K562 (cell line): ENCODE measurements at regions of chr10 and their contacts with region 1.

Region 1: GRCh38 chr10:48506147-48506917 is 98.5 kb downstream of the ARHGAP22 start:
- DNase-seq: peak; percentile 81 to 95 (median 86)
- ATAC-seq: peak; percentile 94
- H3K4me3 ChIP-seq: no peak overlapping the region
- H3K27ac ChIP-seq: peak overlapping the region; percentile 63
- H3K4me1 ChIP-seq: peaks cover 50 to 53% of the 10 kb centered on the region in 2 experiments
- H3K27me3 ChIP-seq: no peaks in the 10 kb centered on the region
- CTCF ChIP-seq: peak; percentile 98 to 99 (median 99)
- EP300 ChIP-seq: no peak
- POLR2A ChIP-seq: no peak
- RAD21 ChIP-seq: peak; percentile 100

Region 2: DNA sequence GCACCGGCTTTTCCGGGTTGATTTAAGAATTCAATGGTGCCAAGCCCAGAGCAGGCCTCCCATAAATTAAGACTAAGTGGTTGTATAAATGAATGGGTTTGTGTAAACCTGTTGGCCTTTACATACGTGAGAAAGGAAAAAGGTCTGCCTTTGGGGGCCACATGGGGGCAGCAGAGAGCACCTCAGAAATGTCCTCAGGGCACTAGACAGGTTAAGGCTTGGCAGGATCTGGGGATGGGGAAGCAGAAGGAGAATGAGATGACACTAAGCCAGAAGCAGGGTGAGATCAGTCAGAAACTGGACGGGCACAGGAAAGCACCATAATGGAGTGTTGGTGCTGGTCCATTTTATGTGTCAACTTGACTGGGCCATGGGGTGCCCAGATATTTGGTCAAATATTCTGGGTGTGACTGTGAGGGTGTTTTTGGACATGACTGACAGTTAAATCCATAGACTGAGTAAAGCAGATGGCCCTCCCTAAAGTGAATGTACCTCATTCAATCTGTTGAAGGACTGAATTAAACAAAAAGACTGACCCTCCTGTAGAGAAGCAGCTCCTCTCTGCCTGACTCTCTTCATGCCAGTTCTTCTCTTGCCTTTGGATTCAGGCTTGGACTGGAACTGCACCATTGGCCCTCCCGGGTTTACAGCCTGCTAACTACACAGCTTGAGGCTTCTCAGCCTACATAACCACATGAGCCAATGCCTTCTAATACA is 290.7 kb before region 1 on chr10:
- CTCF ChIA-PET with region 1: interaction called, 5 read pairs
- POLR2A ChIA-PET with region 1: interaction called, 3 read pairs
- in situ Hi-C with region 1: loop called (anchors 5 kb)
- intact Hi-C with region 1: loop called (anchors 2 kb)
- DNase-seq: peak; percentile 60 to 79 (median 75)
- ATAC-seq: peak; percentile 98
- H3K4me3 ChIP-seq: no peak overlapping the region
- H3K27ac ChIP-seq: no peak overlapping the region
- H3K4me1 ChIP-seq: no peaks in the 10 kb centered on the region
- H3K27me3 ChIP-seq: peaks cover 0 to 12% of the 10 kb centered on the region in 2 experiments; a peak in 3 of 5 replicates
- CTCF ChIP-seq: peak; percentile 88 to 92 (median 91)
- EP300 ChIP-seq: no peak
- POLR2A ChIP-seq: no peak
- RAD21 ChIP-seq: peak; percentile 44 to 80; a peak in 3 of 4 replicates

Region 3: GRCh38 chr10:48306265-48306869 is 200.0 kb before region 1 on chr10 and contains the start of gene MAPK8:
- CTCF ChIA-PET with region 1: no interaction called
- POLR2A ChIA-PET with region 1: interaction called, 4 read pairs
- in situ Hi-C with region 1: no loop called
- intact Hi-C with region 1: loop called (anchors 2 kb)
- DNase-seq: peak; percentile 97 to 100 (median 100)
- ATAC-seq: peak; percentile 92
- H3K4me3 ChIP-seq: peak within 1 kb of the TSS; percentile 81
- H3K27ac ChIP-seq: peak within 1 kb of the TSS; percentile 90
- H3K4me1 ChIP-seq: peaks cover 9 to 19% of the 10 kb centered on the region in 2 experiments
- H3K27me3 ChIP-seq: no peaks in the 10 kb centered on the region; a peak in 1 of 5 replicates
- CTCF ChIP-seq: no peak; a peak in 1 of 6 replicates
- EP300 ChIP-seq: 0 out of 2 replicates have a peak, but pooled peaks have one; percentile 23
- POLR2A ChIP-seq: peak; percentile 88
- RAD21 ChIP-seq: no peak
- polyA plus RNA-seq, gene MAPK8: 6.4 to 6.8 TPM

Region 4: DNA sequence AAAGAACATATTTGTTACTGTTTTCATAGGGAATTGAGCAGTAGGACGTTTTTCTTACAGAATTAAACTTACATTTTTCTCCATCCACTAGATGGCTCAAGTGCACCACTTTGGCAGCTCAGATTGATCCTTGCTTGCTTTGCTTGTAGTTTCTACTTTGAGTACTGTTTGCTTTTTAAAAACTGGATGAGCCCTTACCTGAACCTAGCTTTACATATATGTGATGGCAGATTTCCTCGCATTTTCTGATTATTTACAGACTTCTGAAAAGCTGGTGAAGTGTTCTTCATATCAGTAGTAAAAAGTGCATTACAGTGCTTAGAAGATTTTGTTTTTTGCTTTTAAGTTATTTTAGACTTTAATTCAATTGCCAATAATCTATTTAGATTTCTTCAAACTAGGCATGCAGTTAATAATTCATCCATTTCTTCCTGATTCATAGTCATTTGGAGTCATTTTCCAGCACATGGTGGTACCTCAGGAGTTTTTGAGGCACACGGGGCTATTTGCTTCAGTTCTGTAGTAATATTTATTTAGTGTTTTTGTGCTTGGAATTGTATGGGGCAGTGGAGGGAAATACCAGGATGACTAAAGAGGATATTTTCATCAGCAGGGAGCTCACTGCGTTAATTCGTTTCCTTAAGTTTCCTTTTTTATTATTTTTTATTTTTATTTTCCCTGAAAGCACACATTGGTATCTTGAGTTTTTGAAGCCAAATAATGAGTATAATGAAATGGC is 142.5 kb before region 1 on chr10:
- CTCF ChIA-PET with region 1: interaction called, 77 read pairs
- POLR2A ChIA-PET with region 1: interaction called, 4 read pairs
- in situ Hi-C with region 1: loop called (anchors 5 kb)
- intact Hi-C with region 1: loop called (anchors 1 kb)
- DNase-seq: peak; percentile 30 to 88 (median 50)
- ATAC-seq: peak; percentile 91
- H3K4me3 ChIP-seq: no peak overlapping the region
- H3K27ac ChIP-seq: peak overlapping the region; percentile 36; the same call in 2 of the 3 replicates
- H3K4me1 ChIP-seq: peaks cover 6 to 37% of the 10 kb centered on the region in 2 experiments
- H3K27me3 ChIP-seq: no peaks in the 10 kb centered on the region
- CTCF ChIP-seq: peak; percentile 82 to 96 (median 83)
- EP300 ChIP-seq: no peak
- POLR2A ChIP-seq: no peak
- RAD21 ChIP-seq: peak; percentile 98 to 100

Region 5: DNA sequence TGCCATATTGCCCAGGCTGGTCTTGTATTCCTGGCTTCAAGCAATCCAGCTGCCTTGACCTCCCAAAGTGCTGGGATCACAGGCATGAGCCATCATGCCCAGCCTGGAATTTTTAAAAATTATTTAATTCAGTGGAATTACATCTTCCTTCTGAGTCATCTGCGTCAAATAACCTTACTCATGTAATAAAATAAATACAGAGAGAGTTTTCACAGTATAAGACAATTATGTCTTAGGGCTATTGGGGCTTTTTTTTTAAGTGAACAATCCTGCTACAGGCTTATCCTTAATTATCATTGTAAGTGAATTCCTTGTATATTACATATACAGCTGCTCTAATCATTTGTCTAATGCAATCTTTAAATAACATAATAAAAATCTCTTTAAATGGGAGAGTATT is 91.6 kb before region 1 on chr10:
- CTCF ChIA-PET with region 1: interaction called, 3 read pairs
- POLR2A ChIA-PET with region 1: no interaction called
- in situ Hi-C with region 1: no loop called
- intact Hi-C with region 1: loop called (anchors 1 kb)
- DNase-seq: no peak
- ATAC-seq: no peak
- H3K4me3 ChIP-seq: no peak overlapping the region
- H3K27ac ChIP-seq: no peak overlapping the region
- H3K4me1 ChIP-seq: peaks cover 0 to 19% of the 10 kb centered on the region in 2 experiments; a peak in 3 of 5 replicates
- H3K27me3 ChIP-seq: no peaks in the 10 kb centered on the region
- CTCF ChIP-seq: no peak
- EP300 ChIP-seq: no peak
- POLR2A ChIP-seq: no peak
- RAD21 ChIP-seq: no peak

Region 6: DNA sequence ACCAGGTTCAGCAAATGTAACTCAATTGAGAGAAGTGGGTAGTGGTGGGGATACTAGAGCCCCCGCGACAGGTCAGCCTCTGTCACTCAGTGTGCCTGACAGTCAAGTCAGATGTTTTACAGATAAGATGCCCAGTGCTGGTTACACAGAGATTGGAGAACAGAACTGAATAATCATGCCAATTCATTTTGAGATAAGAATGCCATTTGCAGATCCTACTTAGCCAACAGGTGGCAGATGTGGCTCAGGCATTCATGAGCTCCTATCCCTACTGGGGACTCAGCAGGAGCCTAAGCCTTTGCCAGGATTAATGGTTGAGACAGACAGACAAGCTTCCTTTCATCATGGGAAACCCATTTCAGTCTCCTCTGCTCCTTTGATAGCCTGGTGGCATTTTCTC is 62.1 kb before region 1 on chr10:
- CTCF ChIA-PET with region 1: interaction called, 63 read pairs
- POLR2A ChIA-PET with region 1: interaction called, 4 read pairs
- in situ Hi-C with region 1: loop called (anchors 5 kb)
- intact Hi-C with region 1: loop called (anchors 1 kb)
- DNase-seq: peak in 2 of 4 experiments; percentile 46 to 67
- ATAC-seq: peak; percentile 57
- H3K4me3 ChIP-seq: no peak overlapping the region
- H3K27ac ChIP-seq: no peak overlapping the region
- H3K4me1 ChIP-seq: peaks cover 0 to 16% of the 10 kb centered on the region in 2 experiments
- H3K27me3 ChIP-seq: no peaks in the 10 kb centered on the region
- CTCF ChIP-seq: peak; percentile 65 to 80 (median 67)
- EP300 ChIP-seq: no peak
- POLR2A ChIP-seq: no peak
- RAD21 ChIP-seq: peak; percentile 94 to 98

Region 7: GRCh38 chr10:48470115-48470892 is 36.0 kb before region 1 on chr10:
- CTCF ChIA-PET with region 1: no interaction called
- POLR2A ChIA-PET with region 1: no interaction called
- in situ Hi-C with region 1: no loop called
- intact Hi-C with region 1: loop called (anchors 2 kb)
- DNase-seq: peak; percentile 70 to 99 (median 85)
- ATAC-seq: peak; percentile 88
- H3K4me3 ChIP-seq: no peak overlapping the region
- H3K27ac ChIP-seq: peak overlapping the region; percentile 100
- H3K4me1 ChIP-seq: peaks cover 69 to 71% of the 10 kb centered on the region in 2 experiments
- H3K27me3 ChIP-seq: no peaks in the 10 kb centered on the region; a peak in 1 of 5 replicates
- CTCF ChIP-seq: peak in 1 of 3 experiments; percentile 9; a peak in 1 of 6 replicates
- EP300 ChIP-seq: peak; percentile 100
- POLR2A ChIP-seq: peak; percentile 79
- RAD21 ChIP-seq: peak; percentile 45 to 63; a peak in 3 of 4 replicates

Region 8: DNA sequence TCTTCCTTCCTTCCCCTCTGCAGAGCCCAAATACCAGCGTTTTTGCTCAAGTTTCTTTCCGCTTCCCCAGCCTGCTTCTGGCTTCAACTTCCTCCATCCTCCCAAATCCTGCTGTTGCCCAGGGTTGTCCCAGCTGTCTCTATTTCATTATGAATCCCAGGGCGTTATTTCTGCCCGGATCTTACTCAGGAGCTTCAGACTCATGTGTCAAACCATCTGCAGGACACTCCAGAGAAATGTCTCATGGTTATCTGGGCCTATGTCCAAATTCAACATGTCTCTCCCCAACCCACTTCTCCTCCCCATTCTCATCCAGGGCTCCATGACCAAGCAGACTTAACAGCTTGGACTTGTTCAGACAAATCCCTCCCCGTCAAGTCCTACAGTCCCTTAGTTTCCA is 82.9 kb after region 1 on chr10:
- CTCF ChIA-PET with region 1: no interaction called
- POLR2A ChIA-PET with region 1: no interaction called
- in situ Hi-C with region 1: no loop called
- intact Hi-C with region 1: no loop called
- DNase-seq: no peak
- ATAC-seq: no peak
- H3K4me3 ChIP-seq: no peak overlapping the region
- H3K27ac ChIP-seq: no peak overlapping the region
- H3K4me1 ChIP-seq: no peaks in the 10 kb centered on the region
- H3K27me3 ChIP-seq: peaks cover 41 to 58% of the 10 kb centered on the region in 2 experiments
- CTCF ChIP-seq: no peak
- EP300 ChIP-seq: no peak
- POLR2A ChIP-seq: no peak
- RAD21 ChIP-seq: no peak

Region 9: DNA sequence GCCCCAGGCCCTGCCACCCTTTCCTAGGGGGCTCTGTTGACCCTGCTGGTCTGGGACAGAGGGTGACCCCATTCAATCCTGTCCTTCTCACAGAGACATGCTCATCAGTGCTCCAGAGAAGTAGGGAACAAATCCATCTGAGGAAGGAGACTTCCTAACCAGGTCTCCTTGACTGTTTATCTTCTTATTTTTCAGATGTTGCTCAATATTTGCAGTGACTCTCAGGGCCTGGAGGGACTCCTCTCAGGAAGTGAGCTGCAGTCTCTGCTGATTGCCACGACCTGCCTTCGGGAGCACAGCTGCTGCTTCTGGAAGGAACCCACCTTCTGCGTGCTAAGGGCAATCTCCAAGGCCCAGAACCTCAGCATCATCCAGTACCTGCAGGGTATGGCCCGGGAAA is 219.4 kb after region 1 on chr10:
- CTCF ChIA-PET with region 1: no interaction called
- POLR2A ChIA-PET with region 1: no interaction called
- in situ Hi-C with region 1: no loop called
- intact Hi-C with region 1: no loop called
- DNase-seq: no peak
- ATAC-seq: no peak
- H3K4me3 ChIP-seq: no peak overlapping the region
- H3K27ac ChIP-seq: no peak overlapping the region
- H3K4me1 ChIP-seq: no peaks in the 10 kb centered on the region
- H3K27me3 ChIP-seq: peaks cover 0 to 16% of the 10 kb centered on the region in 2 experiments; a peak in 2 of 5 replicates
- CTCF ChIP-seq: no peak
- EP300 ChIP-seq: no peak
- POLR2A ChIP-seq: no peak
- RAD21 ChIP-seq: no peak